Activated CD4-positive, alpha-beta memory T cell treated with anti-CD3 and anti-CD28 coated beads, Interleukin-2, amount 10 ng/mL, durations not matched to agents 7 days and 5 days (primary cell): ENCODE measurements at regions of chr10 and their contacts with region 1.

Region 1: GRCh38 chr10:122565728-122566206 is 5.2 kb downstream of the DMBT1 start:
- DNase-seq: peak; percentile 74
- H3K4me3 Mint-ChIP-seq: no peak overlapping the region
- H3K27ac Mint-ChIP-seq: no peak overlapping the region
- H3K4me1 Mint-ChIP-seq: peaks cover 7% of the 10 kb centered on the region
- H3K27me3 Mint-ChIP-seq: peaks cover 41% of the 10 kb centered on the region

Region 2: GRCh38 chr10:122298598-122299301 is 267.0 kb before region 1 on chr10:
- CTCF ChIA-PET with region 1: interaction called, 18 read pairs
- POLR2A ChIA-PET with region 1: no interaction called
- DNase-seq: peak; percentile 70
- H3K4me3 Mint-ChIP-seq: no peak overlapping the region
- H3K27ac Mint-ChIP-seq: no peak overlapping the region
- H3K4me1 Mint-ChIP-seq: peaks cover 35% of the 10 kb centered on the region
- H3K27me3 Mint-ChIP-seq: peaks cover 27% of the 10 kb centered on the region

Region 3: DNA sequence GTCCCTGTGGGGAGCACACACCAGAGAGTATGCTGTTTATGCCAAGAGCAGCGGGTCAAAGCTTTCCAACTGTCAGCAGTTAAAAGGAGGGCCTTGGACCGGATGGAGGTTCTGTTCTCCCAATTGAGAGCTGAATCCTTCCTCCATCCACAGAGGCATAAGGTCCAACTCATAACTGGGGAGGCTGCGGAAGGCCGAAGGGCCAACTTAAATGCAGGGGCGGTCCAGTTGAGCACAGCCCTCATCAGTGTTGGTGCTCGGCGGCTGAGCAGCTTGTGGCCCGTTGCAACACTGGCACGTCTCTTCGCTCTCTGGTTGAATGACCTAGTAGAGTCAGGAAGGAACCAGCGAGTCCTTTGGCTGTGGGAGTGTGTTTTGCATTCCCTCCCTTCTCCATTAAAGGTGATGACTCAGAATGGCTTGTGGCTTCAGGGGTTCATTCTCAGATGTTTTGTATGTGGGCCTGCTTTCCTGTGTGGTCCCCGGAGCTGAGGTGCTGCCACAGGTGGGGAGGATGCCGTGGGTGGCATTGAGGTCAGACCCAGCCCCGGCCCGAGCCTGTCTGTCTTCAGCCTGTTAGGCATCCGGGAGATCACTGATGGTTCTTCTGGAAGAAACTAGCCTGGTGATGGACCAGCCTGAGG is 50.1 kb before region 1 on chr10:
- CTCF ChIA-PET with region 1: interaction called, 17 read pairs
- POLR2A ChIA-PET with region 1: no interaction called
- DNase-seq: peak; percentile 81
- H3K4me3 Mint-ChIP-seq: no peak overlapping the region
- H3K27ac Mint-ChIP-seq: peak overlapping the region; percentile 56
- H3K4me1 Mint-ChIP-seq: peaks cover 34% of the 10 kb centered on the region
- H3K27me3 Mint-ChIP-seq: peaks cover 6% of the 10 kb centered on the region

Region 4: DNA sequence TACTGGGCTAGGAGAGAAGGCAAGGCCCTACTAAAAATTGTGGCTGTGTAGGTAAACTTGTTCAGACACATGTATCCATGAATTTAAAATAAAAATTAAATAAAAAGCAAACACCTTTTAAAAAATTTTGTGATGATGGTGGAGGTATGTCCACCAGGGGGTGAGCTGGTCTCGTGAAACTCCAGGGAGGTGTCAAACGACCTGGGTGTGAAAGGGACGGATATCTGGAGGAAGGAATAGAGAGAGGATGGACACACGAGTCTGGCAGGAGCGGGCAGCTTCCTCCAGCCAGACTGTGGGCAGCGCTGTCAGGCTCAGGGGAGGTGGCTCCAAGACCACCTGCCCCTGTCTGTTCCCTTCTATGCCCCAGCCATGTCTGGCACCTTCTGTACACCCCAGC is 40.0 kb before region 1 on chr10:
- CTCF ChIA-PET with region 1: interaction called, 18 read pairs
- POLR2A ChIA-PET with region 1: no interaction called
- DNase-seq: peak; percentile 22
- H3K4me3 Mint-ChIP-seq: no peak overlapping the region
- H3K27ac Mint-ChIP-seq: no peak overlapping the region
- H3K4me1 Mint-ChIP-seq: peaks cover 7% of the 10 kb centered on the region
- H3K27me3 Mint-ChIP-seq: peaks cover 15% of the 10 kb centered on the region

Region 5: DNA sequence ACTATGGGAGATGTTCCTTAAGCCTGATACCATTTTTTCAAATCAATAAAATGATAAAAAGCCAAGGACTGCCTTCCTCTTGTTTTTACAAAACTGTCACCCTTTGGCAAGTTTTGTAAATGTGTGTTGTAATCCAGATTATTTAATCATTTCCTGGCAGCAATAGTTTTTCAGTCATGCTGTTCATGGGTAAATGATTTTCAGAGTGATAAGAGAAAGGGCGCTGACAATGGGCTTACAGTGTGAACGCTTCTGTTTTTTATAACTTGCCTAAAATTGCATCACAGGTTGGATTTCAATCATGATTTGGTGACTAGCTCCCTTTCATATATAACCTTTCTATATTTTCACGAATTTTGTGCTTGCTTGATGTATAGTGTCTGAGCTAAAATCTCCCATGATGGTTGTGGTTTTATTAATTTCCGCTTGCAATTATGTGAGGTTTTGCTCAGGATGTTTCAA is 24.2 kb before region 1 on chr10:
- CTCF ChIA-PET with region 1: interaction called, 15 read pairs
- POLR2A ChIA-PET with region 1: no interaction called
- DNase-seq: no peak
- H3K4me3 Mint-ChIP-seq: no peak overlapping the region
- H3K27ac Mint-ChIP-seq: no peak overlapping the region
- H3K4me1 Mint-ChIP-seq: peaks cover 43% of the 10 kb centered on the region
- H3K27me3 Mint-ChIP-seq: peaks cover 20% of the 10 kb centered on the region

Region 6: GRCh38 chr10:122854648-122855047 is 288.9 kb after region 1 on chr10:
- CTCF ChIA-PET with region 1: no interaction called
- POLR2A ChIA-PET with region 1: no interaction called
- DNase-seq: no peak
- H3K4me3 Mint-ChIP-seq: no peak overlapping the region
- H3K27ac Mint-ChIP-seq: no peak overlapping the region
- H3K4me1 Mint-ChIP-seq: peaks cover 29% of the 10 kb centered on the region
- H3K27me3 Mint-ChIP-seq: no peaks in the 10 kb centered on the region